Calu3 (cell line): ENCODE measurements at regions of chr1 and their contacts with region 1.

Region 1: GRCh38 chr1:211323156-211324063 is 3.2 kb upstream of the TRAF5 start:
- DNase-seq: peak; percentile 70
- H3K4me3 Mint-ChIP-seq: no peak overlapping the region
- H3K27ac Mint-ChIP-seq: no peak overlapping the region
- H3K4me1 Mint-ChIP-seq: peaks cover 25% of the 10 kb centered on the region
- H3K27me3 Mint-ChIP-seq: no peaks in the 10 kb centered on the region
- CTCF ChIP-seq: peak; percentile 73

Region 2: DNA sequence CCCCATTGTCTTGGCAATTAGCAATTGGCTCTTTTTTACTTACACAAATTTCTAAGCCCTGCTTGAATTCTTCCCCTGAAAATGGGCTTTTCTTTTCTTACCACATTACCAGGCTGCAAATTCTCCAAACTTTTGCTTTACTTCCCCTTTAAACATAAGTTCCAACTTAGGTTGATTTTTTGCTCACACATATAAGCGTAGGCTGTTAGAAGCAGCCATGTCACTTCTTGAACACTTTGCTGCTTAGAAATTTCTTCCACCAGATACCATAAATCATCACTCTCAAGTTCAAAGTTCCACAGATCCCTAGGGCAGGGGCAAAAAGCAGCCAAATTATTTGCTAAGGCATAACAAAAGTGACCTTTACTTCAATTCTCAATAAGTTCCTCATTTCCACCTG is 154.1 kb before region 1 on chr1:
- CTCF ChIA-PET with region 1: no interaction called
- intact Hi-C with region 1: no loop called
- DNase-seq: no peak
- H3K4me3 Mint-ChIP-seq: no peak overlapping the region
- H3K27ac Mint-ChIP-seq: no peak overlapping the region
- H3K4me1 Mint-ChIP-seq: no peaks in the 10 kb centered on the region
- H3K27me3 Mint-ChIP-seq: peaks cover 14% of the 10 kb centered on the region
- CTCF ChIP-seq: no peak

Region 3: DNA sequence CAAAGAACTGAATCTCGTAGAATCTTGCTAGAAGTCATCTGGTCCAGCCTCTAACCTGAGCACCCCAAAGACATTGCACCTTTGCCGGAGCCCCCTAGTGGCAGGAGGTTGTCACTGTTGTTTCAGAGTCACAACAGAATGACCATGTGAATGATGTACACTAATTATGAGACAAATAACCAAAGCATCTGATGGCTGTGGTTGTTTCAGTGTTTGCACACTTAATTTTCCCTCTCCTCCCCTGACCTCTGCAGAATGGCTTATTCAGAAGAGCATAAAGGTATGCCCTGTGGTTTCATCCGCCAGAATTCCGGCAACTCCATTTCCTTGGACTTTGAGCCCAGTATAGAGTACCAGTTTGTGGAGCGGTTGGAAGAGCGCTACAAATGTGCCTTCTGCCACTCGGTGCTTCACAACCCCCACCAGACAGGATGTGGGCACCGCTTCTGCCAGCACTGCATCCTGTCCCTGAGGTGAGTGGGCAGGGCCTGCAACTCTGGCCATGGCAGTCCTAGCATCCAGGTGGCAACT is 29.6 kb after region 1 on chr1:
- CTCF ChIA-PET with region 1: interaction called, 3 read pairs
- intact Hi-C with region 1: loop called (anchors 1 kb)
- DNase-seq: peak; percentile 77
- H3K4me3 Mint-ChIP-seq: no peak overlapping the region
- H3K27ac Mint-ChIP-seq: no peak overlapping the region
- H3K4me1 Mint-ChIP-seq: peaks cover 18% of the 10 kb centered on the region
- H3K27me3 Mint-ChIP-seq: no peaks in the 10 kb centered on the region
- CTCF ChIP-seq: peak; percentile 92

Region 4: GRCh38 chr1:211382714-211383480 is 59.5 kb after region 1 on chr1:
- CTCF ChIA-PET with region 1: no interaction called
- intact Hi-C with region 1: loop called (anchors 2 kb)
- DNase-seq: peak; percentile 93
- H3K4me3 Mint-ChIP-seq: peak overlapping the region; percentile 94
- H3K27ac Mint-ChIP-seq: peak overlapping the region; percentile 100
- H3K4me1 Mint-ChIP-seq: peaks cover 13% of the 10 kb centered on the region
- H3K27me3 Mint-ChIP-seq: no peaks in the 10 kb centered on the region
- CTCF ChIP-seq: no peak

Region 5: GRCh38 chr1:211476200-211476849 is 152.9 kb after region 1 on chr1:
- CTCF ChIA-PET with region 1: no interaction called
- intact Hi-C with region 1: loop called (anchors 2 kb)
- DNase-seq: peak; percentile 89
- H3K4me3 Mint-ChIP-seq: no peak overlapping the region
- H3K27ac Mint-ChIP-seq: no peak overlapping the region
- H3K4me1 Mint-ChIP-seq: no peaks in the 10 kb centered on the region
- H3K27me3 Mint-ChIP-seq: peaks cover 10% of the 10 kb centered on the region
- CTCF ChIP-seq: peak; percentile 78

Region 6: DNA sequence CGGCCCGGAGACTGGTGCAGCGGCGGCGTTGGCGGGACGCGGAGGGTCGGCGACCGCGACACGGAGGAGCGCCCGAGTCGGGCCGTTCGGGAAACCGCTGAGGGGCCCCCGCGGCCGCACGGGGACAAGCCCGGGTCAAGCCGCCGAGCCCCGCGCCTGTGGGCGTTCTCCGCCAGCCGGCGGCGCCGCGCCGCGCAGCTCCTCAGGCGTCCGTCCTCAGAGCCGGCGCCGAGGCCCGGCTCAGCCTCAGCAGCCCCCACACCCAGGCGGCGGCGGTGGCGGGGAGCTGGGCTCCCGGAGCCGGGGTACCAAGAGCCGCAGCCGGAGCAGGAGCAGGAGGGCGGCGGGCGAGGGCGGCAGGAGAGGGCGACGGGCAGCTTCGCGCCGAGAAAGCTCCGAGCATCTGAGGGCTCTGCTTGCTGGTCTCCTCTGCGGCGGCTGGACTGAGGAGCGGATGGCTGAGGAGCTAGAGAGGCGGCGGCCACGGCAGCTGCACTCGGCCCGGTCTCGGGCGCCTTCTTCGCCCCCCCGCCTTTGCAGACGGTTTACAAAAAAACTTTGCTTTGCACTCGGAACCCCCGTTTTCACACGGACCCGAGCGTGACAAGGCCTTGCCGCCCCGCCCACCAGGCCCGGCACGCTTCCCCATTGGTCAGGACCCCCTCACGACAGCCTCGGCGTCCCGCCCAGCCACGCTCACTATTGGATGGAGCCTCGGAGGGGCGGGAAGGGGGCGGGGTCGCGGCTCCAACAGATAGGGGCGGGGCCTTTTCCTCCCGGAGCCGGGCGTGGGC is 255.4 kb after region 1 on chr1 and contains the start of gene SLC30A1:
- CTCF ChIA-PET with region 1: no interaction called
- intact Hi-C with region 1: loop called (anchors 2 kb)
- DNase-seq: peak; percentile 99
- H3K4me3 Mint-ChIP-seq: peak within 1 kb of the TSS; percentile 95
- H3K27ac Mint-ChIP-seq: peak within 1 kb of the TSS; percentile 92
- H3K4me1 Mint-ChIP-seq: peaks cover 23% of the 10 kb centered on the region
- H3K27me3 Mint-ChIP-seq: no peaks in the 10 kb centered on the region
- CTCF ChIP-seq: no peak
- total RNA-seq, gene SLC30A1: 15.5 and 25.3 TPM in 2 replicates

Region 7: DNA sequence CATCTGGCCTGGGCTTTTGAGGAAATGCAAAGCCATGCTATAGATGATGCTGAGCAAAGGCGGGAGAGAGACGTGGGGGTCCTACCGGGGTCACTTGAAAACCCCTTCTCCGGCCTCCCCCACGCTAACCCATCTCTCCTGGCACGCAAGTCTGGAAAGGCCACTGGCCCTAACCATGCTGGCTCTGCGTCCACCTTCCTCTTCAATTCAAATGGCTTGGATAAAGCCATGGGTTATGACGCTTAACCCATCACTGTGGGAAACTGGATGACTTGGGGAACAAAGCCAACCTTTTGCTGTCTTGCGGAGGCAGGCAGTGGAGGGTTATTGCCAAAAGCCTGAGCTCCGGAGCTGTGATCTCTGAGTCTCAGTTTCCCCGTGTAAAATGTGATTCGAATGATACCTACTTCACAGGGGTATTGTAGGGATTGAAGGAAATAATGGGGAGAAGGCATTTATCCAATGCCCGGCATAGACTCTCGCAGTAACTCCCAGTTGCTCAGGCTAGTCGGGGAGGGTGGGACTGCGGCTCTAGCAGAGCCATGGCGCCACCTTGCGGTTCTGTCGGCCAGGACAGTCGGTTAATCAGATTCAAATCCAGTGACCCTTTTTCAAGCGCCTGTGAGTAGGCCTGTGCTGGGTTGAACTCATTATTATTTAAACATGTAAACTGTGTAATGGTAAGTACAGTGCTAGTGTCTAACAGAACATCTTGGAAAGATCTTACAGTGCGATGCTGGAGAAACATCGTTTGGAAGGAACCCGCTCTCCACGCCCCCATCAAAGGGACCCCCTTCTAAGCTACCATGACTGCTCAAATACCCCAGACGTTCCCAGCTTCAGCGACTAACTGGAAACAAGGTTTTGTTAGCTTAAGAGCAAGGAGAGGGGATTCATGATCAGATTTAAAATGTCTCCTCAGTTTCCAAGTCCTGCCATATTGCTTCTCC is 331.7 kb after region 1 on chr1:
- CTCF ChIA-PET with region 1: no interaction called
- intact Hi-C with region 1: loop called (anchors 1 kb)
- DNase-seq: peak; percentile 93
- H3K4me3 Mint-ChIP-seq: no peak overlapping the region
- H3K27ac Mint-ChIP-seq: no peak overlapping the region
- H3K4me1 Mint-ChIP-seq: peaks cover 16% of the 10 kb centered on the region
- H3K27me3 Mint-ChIP-seq: no peaks in the 10 kb centered on the region
- CTCF ChIP-seq: peak; percentile 93